Activated CD8-positive, alpha-beta memory T cell treated with anti-CD3 and anti-CD28 coated beads, Interleukin-2, amount 10 ng/mL, durations not matched to agents 7 days and 5 days (primary cell): ENCODE measurements at regions of chr14 and their contacts with region 1.

Region 1: GRCh38 chr14:24630872-24631477 is 3.0 kb downstream of the GZMB start:
- DNase-seq: no peak
- ATAC-seq: no peak
- H3K4me3 Mint-ChIP-seq: peak overlapping the region; percentile 89
- H3K27ac Mint-ChIP-seq: peak overlapping the region; percentile 97
- H3K4me1 Mint-ChIP-seq: peaks cover 73% of the 10 kb centered on the region
- H3K27me3 Mint-ChIP-seq: no peaks in the 10 kb centered on the region

Region 2: GRCh38 chr14:24481622-24482324 is 149.2 kb before region 1 on chr14:
- CTCF ChIA-PET with region 1: interaction called, 10 read pairs
- DNase-seq: peak; percentile 71
- ATAC-seq: peak; percentile 82
- H3K4me3 Mint-ChIP-seq: peak overlapping the region; percentile 38
- H3K27ac Mint-ChIP-seq: peak overlapping the region; percentile 71
- H3K4me1 Mint-ChIP-seq: peaks cover 20% of the 10 kb centered on the region
- H3K27me3 Mint-ChIP-seq: no peaks in the 10 kb centered on the region

Region 3: DNA sequence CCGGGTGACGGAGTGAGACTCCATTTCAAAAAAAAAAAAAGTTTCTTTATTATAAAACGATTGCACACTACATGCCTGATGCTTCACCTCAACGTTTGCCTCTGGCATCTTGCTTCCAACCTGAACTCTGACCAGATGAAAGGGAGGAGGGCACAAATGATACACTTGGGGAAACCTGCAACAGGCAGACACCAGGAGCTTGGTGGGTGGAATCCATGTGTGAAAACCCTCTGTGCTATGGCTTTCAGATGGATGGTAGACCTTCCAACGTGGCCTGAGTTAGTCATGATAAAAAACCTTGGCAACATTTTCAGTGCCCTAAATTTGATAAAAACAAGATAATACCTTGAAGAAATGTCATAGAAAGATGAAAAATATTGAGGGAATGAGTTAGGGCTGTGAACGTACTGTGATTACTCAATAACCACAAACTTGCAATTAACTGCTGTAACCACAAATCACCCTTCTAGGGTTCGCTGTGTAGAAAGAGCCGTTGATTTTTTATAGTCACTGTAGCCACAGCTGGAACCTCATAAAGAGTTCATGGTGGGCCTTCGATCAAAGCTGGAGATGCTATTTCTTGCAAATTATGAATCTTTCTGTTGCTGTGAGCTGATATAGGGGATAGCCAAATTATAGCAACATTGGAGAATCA is 29.1 kb after region 1 on chr14:
- CTCF ChIA-PET with region 1: interaction called, 30 read pairs
- DNase-seq: no peak
- ATAC-seq: peak; percentile 65
- H3K4me3 Mint-ChIP-seq: peak overlapping the region; percentile 17
- H3K27ac Mint-ChIP-seq: peak overlapping the region; percentile 84
- H3K4me1 Mint-ChIP-seq: peaks cover 66% of the 10 kb centered on the region
- H3K27me3 Mint-ChIP-seq: no peaks in the 10 kb centered on the region

Region 4: DNA sequence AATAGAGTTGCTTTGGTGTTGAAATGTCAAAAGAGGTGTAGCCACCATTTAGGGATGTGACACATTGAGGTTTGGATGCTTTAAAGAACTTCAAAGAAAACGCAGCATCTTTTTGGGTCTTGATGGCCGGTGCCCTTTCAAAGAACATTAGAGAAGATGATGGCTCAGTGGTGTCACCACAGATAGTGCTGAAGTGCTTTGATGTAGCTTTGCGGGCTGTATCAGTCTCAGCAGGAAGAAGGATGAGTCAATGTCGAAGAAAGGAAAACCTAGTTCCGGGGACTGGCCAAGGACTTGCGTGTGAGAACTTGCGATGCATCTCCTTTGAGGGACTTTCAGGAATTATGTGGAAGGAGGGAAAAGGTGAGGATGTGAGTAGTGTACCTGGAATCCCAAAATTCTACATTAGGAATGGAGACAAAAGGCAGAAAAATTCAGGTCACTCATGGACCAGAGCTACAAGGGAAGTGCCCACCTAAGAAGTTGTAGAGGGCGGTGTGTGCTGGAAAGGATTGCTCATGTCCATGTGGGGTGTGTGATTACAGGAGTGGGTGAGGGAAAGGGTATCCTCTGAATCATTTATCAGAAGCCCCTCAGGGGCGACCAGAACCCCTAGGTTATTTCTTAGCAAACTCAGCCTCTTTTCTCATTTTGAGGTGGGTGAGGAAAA is 42.7 kb after region 1 on chr14:
- CTCF ChIA-PET with region 1: interaction called, 45 read pairs
- DNase-seq: peak; percentile 90
- ATAC-seq: peak; percentile 77
- H3K4me3 Mint-ChIP-seq: peak overlapping the region; percentile 74
- H3K27ac Mint-ChIP-seq: peak overlapping the region; percentile 100
- H3K4me1 Mint-ChIP-seq: peaks cover 89% of the 10 kb centered on the region
- H3K27me3 Mint-ChIP-seq: no peaks in the 10 kb centered on the region

Region 5: GRCh38 chr14:24690492-24690891 is 59.5 kb after region 1 on chr14:
- CTCF ChIA-PET with region 1: interaction called, 16 read pairs
- DNase-seq: peak; percentile 57
- ATAC-seq: peak; percentile 16
- H3K4me3 Mint-ChIP-seq: no peak overlapping the region
- H3K27ac Mint-ChIP-seq: no peak overlapping the region
- H3K4me1 Mint-ChIP-seq: peaks cover 37% of the 10 kb centered on the region
- H3K27me3 Mint-ChIP-seq: no peaks in the 10 kb centered on the region